ENCODE measurements at regions of chr2 and their contacts with region 1.

Region 1: DNA sequence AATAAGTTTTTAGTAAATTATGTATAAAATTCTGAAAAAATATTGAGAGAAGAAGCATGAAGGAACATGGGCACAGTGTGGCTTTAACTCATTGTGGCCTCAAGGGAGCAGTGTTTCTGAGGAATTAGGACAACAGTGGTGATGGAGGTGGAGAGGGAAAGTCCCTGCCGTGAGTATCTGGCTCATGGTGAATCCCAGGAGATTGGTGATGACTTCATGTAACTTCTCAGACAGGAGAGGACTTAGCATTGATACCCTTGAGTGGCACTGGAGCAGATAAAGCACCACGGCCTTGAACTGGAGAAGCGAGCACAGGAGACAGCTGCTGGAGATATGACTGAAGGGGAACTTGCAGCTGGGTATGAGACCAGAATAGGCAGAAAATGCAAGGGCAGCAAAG is 35.0 kb upstream of the LRP1B start:
- DNase-seq: peak; percentile 74
- H3K4me3 ChIP-seq: no peak overlapping the region
- H3K27ac ChIP-seq: no peak overlapping the region
- H3K4me1 ChIP-seq: no peaks in the 10 kb centered on the region
- H3K27me3 ChIP-seq: no peaks in the 10 kb centered on the region
- CTCF ChIP-seq: peak; percentile 59 to 73

Region 2: GRCh38 chr2:141660232-141660631 is 505.6 kb before region 1 on chr2:
- CTCF ChIA-PET with region 1: no interaction called
- dilution Hi-C with region 1: no loop called
- in situ Hi-C with region 1: no loop called
- intact Hi-C with region 1: no loop called
- DNase-seq: no peak
- H3K4me3 ChIP-seq: no peak overlapping the region
- H3K27ac ChIP-seq: no peak overlapping the region
- H3K4me1 ChIP-seq: no peaks in the 10 kb centered on the region
- H3K27me3 ChIP-seq: no peaks in the 10 kb centered on the region
- CTCF ChIP-seq: no peak

Region 3: DNA sequence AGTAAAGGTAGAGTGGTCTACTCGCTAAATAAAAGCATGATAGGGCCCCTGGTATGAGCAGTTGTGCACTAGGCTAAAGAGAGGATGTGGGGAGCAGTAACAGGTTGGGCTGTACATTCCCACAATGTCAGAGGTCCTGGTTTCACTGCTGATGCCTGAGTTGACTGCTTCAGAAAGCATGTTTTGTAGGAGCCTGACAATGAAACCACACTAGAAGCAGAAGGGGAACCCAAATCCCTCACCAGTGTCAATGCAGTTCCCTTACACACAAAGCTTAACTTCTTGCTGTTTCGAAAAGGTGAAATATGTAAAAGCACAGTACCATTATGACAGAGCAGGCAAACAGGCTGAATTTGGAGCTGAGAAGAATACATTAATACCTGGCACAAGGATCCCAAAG is 420.0 kb after region 1 on chr2:
- CTCF ChIA-PET with region 1: no interaction called
- dilution Hi-C with region 1: no loop called
- in situ Hi-C with region 1: loop called (anchors 25 kb)
- intact Hi-C with region 1: no loop called
- DNase-seq: no peak
- H3K4me3 ChIP-seq: no peak overlapping the region
- H3K27ac ChIP-seq: no peak overlapping the region
- H3K4me1 ChIP-seq: no peaks in the 10 kb centered on the region
- H3K27me3 ChIP-seq: no peaks in the 10 kb centered on the region
- CTCF ChIP-seq: no peak

Region 4: GRCh38 chr2:142603759-142604158 is 438.0 kb after region 1 on chr2:
- CTCF ChIA-PET with region 1: no interaction called
- dilution Hi-C with region 1: no loop called
- in situ Hi-C with region 1: loop called (anchors 25 kb)
- intact Hi-C with region 1: loop called (anchors 1 kb)
- DNase-seq: no peak
- H3K4me3 ChIP-seq: no peak overlapping the region
- H3K27ac ChIP-seq: no peak overlapping the region
- H3K4me1 ChIP-seq: no peaks in the 10 kb centered on the region
- H3K27me3 ChIP-seq: no peaks in the 10 kb centered on the region
- CTCF ChIP-seq: peak; percentile 22 to 40

Region 5: DNA sequence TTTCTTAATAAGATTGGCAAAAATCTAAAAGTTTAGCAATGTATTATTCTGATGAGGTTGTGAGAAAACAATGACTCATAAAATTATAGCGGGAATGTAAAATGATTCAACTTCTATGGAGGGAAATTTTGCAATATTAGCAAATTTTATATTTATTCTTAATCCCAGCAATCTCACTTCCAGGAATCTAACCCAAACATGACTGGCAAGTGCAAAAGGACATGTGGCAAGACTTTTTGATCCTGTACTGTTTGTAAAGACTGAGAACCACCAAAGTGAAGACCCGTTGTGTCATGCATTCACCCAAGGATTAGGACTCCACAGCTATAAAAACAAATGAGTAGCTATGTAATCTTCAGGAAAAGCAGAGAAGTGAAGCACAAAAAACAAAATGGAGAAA is 476.9 kb after region 1 on chr2:
- CTCF ChIA-PET with region 1: no interaction called
- dilution Hi-C with region 1: no loop called
- in situ Hi-C with region 1: no loop called
- intact Hi-C with region 1: loop called (anchors 1 kb)
- DNase-seq: no peak
- H3K4me3 ChIP-seq: no peak overlapping the region
- H3K27ac ChIP-seq: no peak overlapping the region
- H3K4me1 ChIP-seq: no peaks in the 10 kb centered on the region
- H3K27me3 ChIP-seq: no peaks in the 10 kb centered on the region
- CTCF ChIP-seq: no peak

Region 6: DNA sequence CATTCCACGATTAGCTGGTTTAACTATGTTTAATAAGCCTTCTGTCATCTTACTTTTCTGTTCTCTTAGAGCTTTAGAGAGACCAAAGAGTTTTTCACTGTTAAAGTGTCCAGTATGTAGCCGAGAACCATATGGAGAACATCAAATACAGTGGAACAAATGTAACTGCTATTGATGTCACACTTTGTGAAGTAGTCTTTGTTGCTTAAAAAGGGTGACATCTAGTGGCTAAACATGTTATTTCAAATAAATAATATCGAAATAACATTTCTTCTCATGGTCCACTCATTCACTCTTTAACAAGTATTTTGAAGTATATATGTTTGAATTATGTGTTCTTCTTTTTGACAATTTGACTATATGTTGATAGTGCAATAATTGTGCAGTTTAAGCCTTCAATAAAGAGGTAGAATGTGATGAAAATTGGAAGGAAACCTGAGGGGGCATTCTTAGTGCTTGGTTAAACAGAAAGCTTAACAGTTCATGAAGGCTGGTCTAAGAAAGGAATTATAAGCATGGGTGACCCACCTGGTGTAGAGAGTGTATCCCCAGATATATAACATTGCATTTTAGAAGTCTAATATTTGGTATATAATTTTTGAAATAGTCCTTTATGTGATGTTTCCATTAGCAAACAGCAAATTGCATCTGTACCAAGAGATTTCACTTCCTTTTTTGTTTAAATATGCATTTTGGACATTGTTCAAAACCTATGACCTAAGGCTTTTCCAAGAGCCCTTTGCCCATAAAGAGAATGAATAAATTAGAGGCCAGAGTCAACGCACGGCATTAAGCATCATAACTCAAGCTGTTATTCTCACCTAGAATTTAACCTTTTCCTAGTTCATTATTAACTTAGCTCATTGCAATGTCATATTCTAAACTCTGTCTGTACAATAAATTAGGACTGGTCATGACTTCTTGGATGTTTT is 823.7 kb after region 1 on chr2:
- CTCF ChIA-PET with region 1: no interaction called
- dilution Hi-C with region 1: no loop called
- in situ Hi-C with region 1: loop called in 1 of 2 experiments (anchors 25 kb)
- intact Hi-C with region 1: loop called (anchors 5 kb)
- DNase-seq: peak; percentile 7
- H3K4me3 ChIP-seq: no peak overlapping the region
- H3K27ac ChIP-seq: no peak overlapping the region
- H3K4me1 ChIP-seq: no peaks in the 10 kb centered on the region
- H3K27me3 ChIP-seq: peaks cover 5% of the 10 kb centered on the region
- CTCF ChIP-seq: peak; percentile 45 to 49

Region 7: GRCh38 chr2:143758629-143759330 is 1593.0 kb after region 1 on chr2:
- CTCF ChIA-PET with region 1: no interaction called
- dilution Hi-C with region 1: no loop called
- in situ Hi-C with region 1: no loop called
- intact Hi-C with region 1: no loop called
- DNase-seq: peak; percentile 9
- H3K4me3 ChIP-seq: no peak overlapping the region
- H3K27ac ChIP-seq: no peak overlapping the region
- H3K4me1 ChIP-seq: no peaks in the 10 kb centered on the region
- H3K27me3 ChIP-seq: no peaks in the 10 kb centered on the region
- CTCF ChIP-seq: no peak